GM12878 (cell line): ENCODE measurements at regions of chr11 and their contacts with region 1.

Region 1: GRCh38 chr11:83836883-83837654 is 550.9 kb upstream of the CCDC90B start:
- DNase-seq: peak; percentile 5
- ATAC-seq: peak; percentile 97
- H3K4me3 ChIP-seq: no peak overlapping the region
- H3K27ac ChIP-seq: no peak overlapping the region
- H3K4me1 ChIP-seq: peaks cover 4% of the 10 kb centered on the region
- H3K27me3 ChIP-seq: peaks cover 0 to 5% of the 10 kb centered on the region in 2 experiments; a peak in 1 of 4 replicates
- CTCF ChIP-seq: peak; percentile 77 to 80 (median 79); a peak in 5 of 6 replicates
- EP300 ChIP-seq: no peak
- POLR2A ChIP-seq: no peak
- RAD21 ChIP-seq: peak; percentile 86

Region 2: DNA sequence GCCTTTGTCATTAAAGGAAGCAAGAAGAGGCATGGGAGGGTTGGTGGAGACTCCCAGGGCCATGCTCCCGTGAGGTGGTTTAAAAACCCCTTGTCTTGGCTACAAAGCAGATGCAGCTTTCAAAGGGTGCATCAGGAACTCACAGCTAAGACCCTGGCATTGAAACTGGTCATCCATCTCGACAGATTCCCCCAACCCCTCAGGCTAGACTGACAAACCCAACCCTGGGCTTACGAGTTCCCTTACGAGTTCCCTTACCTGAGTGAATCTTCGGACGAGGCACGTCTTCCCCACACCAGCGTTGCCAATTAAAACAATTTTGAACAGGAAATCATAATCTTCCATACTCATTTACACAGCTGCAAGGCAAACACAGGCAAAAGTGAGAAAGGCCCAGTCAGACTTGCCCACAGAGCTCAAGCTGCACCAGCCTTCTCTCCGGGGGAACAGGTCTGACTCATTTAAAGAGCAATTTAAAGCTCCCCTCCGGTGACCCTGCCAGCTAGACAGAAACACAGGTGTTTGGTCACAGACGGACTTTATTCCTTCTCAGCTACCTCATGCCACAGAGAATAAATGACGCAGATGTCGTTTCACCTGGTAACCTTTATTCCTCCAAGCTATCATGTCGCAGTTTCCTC is 840.0 kb before region 1 on chr11:
- CTCF ChIA-PET with region 1: no interaction called
- POLR2A ChIA-PET with region 1: no interaction called
- RAD21 ChIA-PET with region 1: no interaction called
- SMC1A ChIA-PET with region 1: no interaction called
- in situ Hi-C with region 1: no loop called
- intact Hi-C with region 1: no loop called
- DNase-seq: peak; percentile 87
- ATAC-seq: peak; percentile 90
- H3K4me3 ChIP-seq: peak overlapping the region; percentile 15; the same call in 1 of the 2 replicates
- H3K27ac ChIP-seq: peak overlapping the region; percentile 67
- H3K4me1 ChIP-seq: peaks cover 46% of the 10 kb centered on the region
- H3K27me3 ChIP-seq: no peaks in the 10 kb centered on the region
- CTCF ChIP-seq: no peak
- EP300 ChIP-seq: peak; percentile 89 to 94; a peak in 3 of 4 replicates
- POLR2A ChIP-seq: no peak
- RAD21 ChIP-seq: 0 out of 2 replicates have a peak, but pooled peaks have one; percentile 0

Region 3: DNA sequence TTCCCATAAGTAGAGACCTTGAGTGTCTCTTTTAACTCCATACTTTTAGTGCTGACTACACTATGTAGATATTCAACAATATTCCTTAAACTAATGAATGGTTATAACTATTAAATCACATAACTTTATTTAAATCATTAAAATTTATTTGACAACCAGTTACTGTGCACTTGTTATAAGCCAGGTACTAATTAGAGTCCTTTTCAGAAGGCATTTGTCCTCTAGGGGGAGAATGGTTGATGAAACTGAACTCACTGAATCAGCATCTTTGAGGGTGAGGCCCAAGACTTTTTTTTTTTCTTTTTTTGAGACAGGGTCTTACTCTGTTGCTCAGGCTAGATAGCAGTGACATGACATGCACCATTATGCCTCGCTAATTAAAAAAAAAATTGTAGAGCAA is 35.3 kb before region 1 on chr11:
- CTCF ChIA-PET with region 1: no interaction called
- POLR2A ChIA-PET with region 1: no interaction called
- RAD21 ChIA-PET with region 1: no interaction called
- SMC1A ChIA-PET with region 1: no interaction called
- in situ Hi-C with region 1: no loop called
- intact Hi-C with region 1: no loop called
- DNase-seq: no peak
- ATAC-seq: no peak
- H3K4me3 ChIP-seq: no peak overlapping the region
- H3K27ac ChIP-seq: no peak overlapping the region
- H3K4me1 ChIP-seq: no peaks in the 10 kb centered on the region
- H3K27me3 ChIP-seq: no peaks in the 10 kb centered on the region
- CTCF ChIP-seq: peak in 2 of 3 experiments; percentile 18 to 25; a peak in 3 of 6 replicates
- EP300 ChIP-seq: no peak
- POLR2A ChIP-seq: no peak
- RAD21 ChIP-seq: no peak

Region 4: DNA sequence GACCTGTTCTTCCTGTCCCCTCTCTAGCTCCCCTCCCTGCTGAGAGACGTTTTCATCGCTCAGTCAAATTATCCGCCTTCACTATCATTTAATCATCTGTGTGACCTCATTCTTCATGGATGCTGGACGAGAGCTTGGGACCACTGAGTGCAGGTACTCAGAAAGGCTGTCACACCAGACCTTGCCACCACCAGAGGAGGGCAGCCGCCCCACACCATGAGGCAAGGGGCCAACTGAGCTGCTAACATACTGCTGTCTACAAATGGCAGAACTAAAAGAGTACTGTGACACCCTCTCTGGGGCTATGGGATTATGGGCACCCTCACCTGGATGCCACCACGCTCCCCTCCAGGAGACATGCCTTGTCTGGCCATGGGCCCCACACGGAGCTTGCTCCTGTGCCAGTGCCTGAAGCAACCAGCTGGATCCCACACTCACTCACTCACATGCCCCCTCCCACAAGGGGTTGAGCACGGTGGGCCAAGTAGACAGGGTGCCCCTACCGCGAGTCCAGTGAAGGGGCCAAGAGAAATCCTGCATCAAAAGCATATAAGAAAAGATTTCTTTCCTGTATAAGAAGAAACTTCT is 119.1 kb after region 1 on chr11:
- CTCF ChIA-PET with region 1: no interaction called
- POLR2A ChIA-PET with region 1: no interaction called
- RAD21 ChIA-PET with region 1: no interaction called
- SMC1A ChIA-PET with region 1: no interaction called
- in situ Hi-C with region 1: no loop called
- intact Hi-C with region 1: loop called (anchors 5 kb)
- DNase-seq: no peak
- ATAC-seq: peak; percentile 69
- H3K4me3 ChIP-seq: no peak overlapping the region
- H3K27ac ChIP-seq: no peak overlapping the region
- H3K4me1 ChIP-seq: no peaks in the 10 kb centered on the region
- H3K27me3 ChIP-seq: no peaks in the 10 kb centered on the region
- CTCF ChIP-seq: peak; percentile 8 to 44 (median 13); a peak in 3 of 6 replicates
- EP300 ChIP-seq: no peak
- POLR2A ChIP-seq: no peak
- RAD21 ChIP-seq: no peak

Region 5: GRCh38 chr11:83971063-83971462 is 134.0 kb after region 1 on chr11:
- CTCF ChIA-PET with region 1: no interaction called
- POLR2A ChIA-PET with region 1: no interaction called
- RAD21 ChIA-PET with region 1: no interaction called
- SMC1A ChIA-PET with region 1: no interaction called
- in situ Hi-C with region 1: no loop called
- intact Hi-C with region 1: loop called (anchors 1 kb)
- DNase-seq: peak; percentile 11
- ATAC-seq: peak; percentile 49
- H3K4me3 ChIP-seq: no peak overlapping the region
- H3K27ac ChIP-seq: peak overlapping the region; percentile 24; the same call in 1 of the 2 replicates
- H3K4me1 ChIP-seq: peaks cover 6% of the 10 kb centered on the region; the same call in 1 of the 2 replicates
- H3K27me3 ChIP-seq: no peaks in the 10 kb centered on the region
- CTCF ChIP-seq: no peak; a peak in 1 of 6 replicates
- EP300 ChIP-seq: no peak
- POLR2A ChIP-seq: no peak
- RAD21 ChIP-seq: no peak

Region 6: DNA sequence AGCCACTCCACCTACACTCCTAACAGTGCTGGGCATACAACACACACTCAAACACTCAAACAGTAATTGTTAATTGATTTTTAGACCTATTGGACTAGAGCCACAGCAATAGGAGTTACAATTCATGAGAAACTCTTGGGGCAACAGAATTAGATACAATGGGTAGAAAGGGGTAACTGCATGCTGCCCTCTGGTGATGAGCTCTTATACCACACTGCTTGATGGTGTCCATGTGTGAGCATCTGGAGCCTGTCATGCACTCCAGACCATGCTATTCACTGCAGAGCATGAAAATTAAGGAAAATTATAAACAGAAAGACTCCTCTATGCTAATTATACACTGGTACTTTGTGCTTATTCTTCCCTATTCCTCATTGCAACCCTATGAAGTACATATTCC is 424.6 kb after region 1 on chr11:
- CTCF ChIA-PET with region 1: interaction called, 37 read pairs
- POLR2A ChIA-PET with region 1: no interaction called
- RAD21 ChIA-PET with region 1: interaction called, 5 read pairs
- SMC1A ChIA-PET with region 1: interaction called, 6 read pairs
- in situ Hi-C with region 1: loop called (anchors 5 kb)
- intact Hi-C with region 1: loop called (anchors 1 kb)
- DNase-seq: no peak
- ATAC-seq: peak; percentile 78
- H3K4me3 ChIP-seq: no peak overlapping the region
- H3K27ac ChIP-seq: no peak overlapping the region
- H3K4me1 ChIP-seq: no peaks in the 10 kb centered on the region
- H3K27me3 ChIP-seq: no peaks in the 10 kb centered on the region; a peak in 1 of 4 replicates
- CTCF ChIP-seq: peak in 2 of 3 experiments; percentile 29 to 40; a peak in 4 of 6 replicates
- EP300 ChIP-seq: 0 out of 4 replicates have a peak, but pooled peaks of 1 of the 2 experiments have one; percentile 9
- POLR2A ChIP-seq: no peak
- RAD21 ChIP-seq: peak; percentile 66

Region 7: DNA sequence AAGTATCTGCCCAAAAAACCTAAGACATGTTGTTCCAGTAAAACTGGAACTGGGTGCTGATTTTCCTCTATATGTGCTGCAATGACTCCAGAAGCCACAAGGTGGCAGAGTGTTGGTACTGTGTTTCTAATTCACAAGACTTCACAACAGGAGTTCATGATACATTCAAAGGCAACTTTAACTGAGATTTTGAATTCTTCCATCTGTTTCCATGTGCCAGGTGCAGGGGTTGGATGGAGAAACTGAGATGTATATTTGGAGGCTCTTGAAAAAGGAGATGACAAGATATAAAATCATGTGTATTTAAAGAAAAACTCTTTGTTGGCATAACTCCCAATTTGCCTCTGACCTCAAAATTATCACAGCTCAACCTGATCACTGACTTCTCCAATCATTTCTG is 547.7 kb after region 1 on chr11:
- CTCF ChIA-PET with region 1: interaction called, 12 read pairs
- POLR2A ChIA-PET with region 1: no interaction called
- RAD21 ChIA-PET with region 1: interaction called, 5 read pairs
- SMC1A ChIA-PET with region 1: no interaction called
- in situ Hi-C with region 1: no loop called
- intact Hi-C with region 1: loop called (anchors 2 kb)
- DNase-seq: no peak
- ATAC-seq: peak; percentile 53; the same call in 2 of the 3 replicates
- H3K4me3 ChIP-seq: no peak overlapping the region
- H3K27ac ChIP-seq: no peak overlapping the region
- H3K4me1 ChIP-seq: no peaks in the 10 kb centered on the region
- H3K27me3 ChIP-seq: no peaks in the 10 kb centered on the region
- CTCF ChIP-seq: peak; percentile 68 to 77 (median 75)
- EP300 ChIP-seq: no peak
- POLR2A ChIP-seq: no peak
- RAD21 ChIP-seq: peak; percentile 67

Region 8: GRCh38 chr11:84524422-84525051 is 687.5 kb after region 1 on chr11:
- CTCF ChIA-PET with region 1: interaction called, 7 read pairs
- POLR2A ChIA-PET with region 1: no interaction called
- RAD21 ChIA-PET with region 1: interaction called, 5 read pairs
- SMC1A ChIA-PET with region 1: no interaction called
- in situ Hi-C with region 1: no loop called
- intact Hi-C with region 1: loop called (anchors 2 kb)
- DNase-seq: no peak
- ATAC-seq: no peak
- H3K4me3 ChIP-seq: no peak overlapping the region
- H3K27ac ChIP-seq: no peak overlapping the region
- H3K4me1 ChIP-seq: no peaks in the 10 kb centered on the region
- H3K27me3 ChIP-seq: no peaks in the 10 kb centered on the region
- CTCF ChIP-seq: peak in 2 of 3 experiments; percentile 29 to 31; a peak in 3 of 6 replicates
- EP300 ChIP-seq: no peak
- POLR2A ChIP-seq: no peak
- RAD21 ChIP-seq: peak; percentile 54

Region 9: GRCh38 chr11:84564180-84564866 is 727.3 kb after region 1 on chr11:
- CTCF ChIA-PET with region 1: interaction called, 32 read pairs
- POLR2A ChIA-PET with region 1: no interaction called
- RAD21 ChIA-PET with region 1: interaction called, 4 read pairs
- SMC1A ChIA-PET with region 1: interaction called, 6 read pairs
- in situ Hi-C with region 1: loop called (anchors 10 kb)
- intact Hi-C with region 1: no loop called
- DNase-seq: no peak
- ATAC-seq: peak; percentile 75
- H3K4me3 ChIP-seq: no peak overlapping the region
- H3K27ac ChIP-seq: no peak overlapping the region
- H3K4me1 ChIP-seq: no peaks in the 10 kb centered on the region
- H3K27me3 ChIP-seq: no peaks in the 10 kb centered on the region; a peak in 1 of 4 replicates
- CTCF ChIP-seq: peak; percentile 74 to 83 (median 78)
- EP300 ChIP-seq: no peak
- POLR2A ChIP-seq: no peak
- RAD21 ChIP-seq: peak; percentile 61